ENCODE measurements at regions of chr2 and their contacts with region 1.

Region 1: GRCh38 chr2:177164584-177165052 is 48.0 kb upstream of the HNRNPA3 start:
- DNase-seq: peak; percentile 59 to 71
- ATAC-seq: peak; percentile 81 to 83
- H3K4me3 ChIP-seq: peak overlapping the region; percentile 41 to 74 (median 52)
- H3K27ac ChIP-seq: peak overlapping the region; percentile 71 to 86 (median 80)
- H3K4me1 ChIP-seq: peaks cover 16 to 23% of the 10 kb centered on the region in 2 donors
- H3K27me3 ChIP-seq: no peaks in the 10 kb centered on the region
- CTCF ChIP-seq: peak; percentile 97 to 100 (median 100)
- POLR2A ChIP-seq: no peak

Region 2: GRCh38 chr2:176978921-176979320 is 185.7 kb before region 1 on chr2:
- in situ Hi-C with region 1: no loop called
- intact Hi-C with region 1: no loop called
- DNase-seq: no peak
- ATAC-seq: no peak
- H3K4me3 ChIP-seq: no peak overlapping the region
- H3K27ac ChIP-seq: no peak overlapping the region
- H3K4me1 ChIP-seq: no peaks in the 10 kb centered on the region
- H3K27me3 ChIP-seq: peaks cover 0 to 2% (median 0%) of the 10 kb centered on the region in 3 donors
- CTCF ChIP-seq: no peak
- POLR2A ChIP-seq: no peak

Region 3: GRCh38 chr2:177212106-177212890 is 47.7 kb after region 1 on chr2 and contains the start of gene HNRNPA3:
- in situ Hi-C with region 1: no loop called
- intact Hi-C with region 1: loop called (anchors 2 kb)
- DNase-seq: peak; percentile 98 to 99
- ATAC-seq: peak; percentile 90 to 92
- H3K4me3 ChIP-seq: peak within 1 kb of the TSS; percentile 75 to 92 (median 82)
- H3K27ac ChIP-seq: peak within 1 kb of the TSS; percentile 95 to 100 (median 98)
- H3K4me1 ChIP-seq: peaks cover 46 to 48% of the 10 kb centered on the region in 2 donors
- H3K27me3 ChIP-seq: no peaks in the 10 kb centered on the region
- CTCF ChIP-seq: peak; percentile 10 to 50 (median 47)
- POLR2A ChIP-seq: peak; percentile 91 to 96
- total RNA-seq, gene HNRNPA3: 16.1 to 32.2 (median 22.4) TPM

Region 4: GRCh38 chr2:177281400-177282180 is 117.0 kb after region 1 on chr2:
- in situ Hi-C with region 1: loop called in 1 of 4 experiments (anchors 10 kb)
- intact Hi-C with region 1: no loop called
- DNase-seq: peak; percentile 36 to 51
- ATAC-seq: peak in 1 of 2 donors; percentile 88
- H3K4me3 ChIP-seq: no peak overlapping the region
- H3K27ac ChIP-seq: peak overlapping the region; percentile 63 to 86 (median 68)
- H3K4me1 ChIP-seq: peaks cover 19 to 53% of the 10 kb centered on the region in 2 donors
- H3K27me3 ChIP-seq: no peaks in the 10 kb centered on the region
- CTCF ChIP-seq: no peak
- POLR2A ChIP-seq: no peak

Region 5: GRCh38 chr2:177332041-177332991 is 167.7 kb after region 1 on chr2:
- in situ Hi-C with region 1: loop called (anchors 5 to 10 kb)
- intact Hi-C with region 1: loop called (anchors 1 kb)
- DNase-seq: peak; percentile 23 to 33
- ATAC-seq: peak; percentile 83 to 91
- H3K4me3 ChIP-seq: no peak overlapping the region
- H3K27ac ChIP-seq: no peak overlapping the region
- H3K4me1 ChIP-seq: peaks cover 0 to 5% of the 10 kb centered on the region in 2 donors
- H3K27me3 ChIP-seq: no peaks in the 10 kb centered on the region
- CTCF ChIP-seq: peak; percentile 51 to 75 (median 64)
- POLR2A ChIP-seq: no peak

Region 6: GRCh38 chr2:177618255-177619253 is 453.9 kb after region 1 on chr2:
- in situ Hi-C with region 1: loop called in 2 of 4 experiments (anchors 25 kb)
- intact Hi-C with region 1: no loop called
- DNase-seq: peak; percentile 82 to 84
- ATAC-seq: peak; percentile 98
- H3K4me3 ChIP-seq: peak overlapping the region; percentile 71 to 98 (median 86)
- H3K27ac ChIP-seq: peak overlapping the region; percentile 90 to 99 (median 94)
- H3K4me1 ChIP-seq: peaks cover 10 to 14% of the 10 kb centered on the region in 2 donors
- H3K27me3 ChIP-seq: no peaks in the 10 kb centered on the region
- CTCF ChIP-seq: no peak
- POLR2A ChIP-seq: peak in 1 of 2 donors; percentile 9

Region 7: GRCh38 chr2:177763532-177764265 is 599.1 kb after region 1 on chr2:
- in situ Hi-C with region 1: loop called in 3 of 4 experiments (anchors 25 kb)
- intact Hi-C with region 1: loop called (anchors 10 kb)
- DNase-seq: peak; percentile 27 to 41
- ATAC-seq: peak; percentile 65 to 85
- H3K4me3 ChIP-seq: no peak overlapping the region
- H3K27ac ChIP-seq: no peak overlapping the region
- H3K4me1 ChIP-seq: peaks cover 0 to 3% of the 10 kb centered on the region in 2 donors
- H3K27me3 ChIP-seq: no peaks in the 10 kb centered on the region
- CTCF ChIP-seq: peak in 4 of 5 experiments; percentile 58 to 84 (median 68)
- POLR2A ChIP-seq: no peak

Measured in gastrocnemius medialis (tissue), 4 donors.